ENCODE measurements at regions of chr15 and their contacts with region 1.

Region 1: GRCh38 chr15:69058830-69059556 is 44.5 kb downstream of the NOX5 start:
- DNase-seq: peak; percentile 90
- H3K4me3 ChIP-seq: no peak overlapping the region
- H3K27ac ChIP-seq: no peak overlapping the region
- H3K4me1 ChIP-seq: peaks cover 0 to 8% (median 2%) of the 10 kb centered on the region in 4 donors
- H3K27me3 ChIP-seq: peaks cover 0 to 11% (median 0%) of the 10 kb centered on the region in 3 donors
- CTCF ChIP-seq: peak; percentile 75 to 89 (median 78)
- EP300 ChIP-seq: no peak
- POLR2A ChIP-seq: no peak

Region 2: DNA sequence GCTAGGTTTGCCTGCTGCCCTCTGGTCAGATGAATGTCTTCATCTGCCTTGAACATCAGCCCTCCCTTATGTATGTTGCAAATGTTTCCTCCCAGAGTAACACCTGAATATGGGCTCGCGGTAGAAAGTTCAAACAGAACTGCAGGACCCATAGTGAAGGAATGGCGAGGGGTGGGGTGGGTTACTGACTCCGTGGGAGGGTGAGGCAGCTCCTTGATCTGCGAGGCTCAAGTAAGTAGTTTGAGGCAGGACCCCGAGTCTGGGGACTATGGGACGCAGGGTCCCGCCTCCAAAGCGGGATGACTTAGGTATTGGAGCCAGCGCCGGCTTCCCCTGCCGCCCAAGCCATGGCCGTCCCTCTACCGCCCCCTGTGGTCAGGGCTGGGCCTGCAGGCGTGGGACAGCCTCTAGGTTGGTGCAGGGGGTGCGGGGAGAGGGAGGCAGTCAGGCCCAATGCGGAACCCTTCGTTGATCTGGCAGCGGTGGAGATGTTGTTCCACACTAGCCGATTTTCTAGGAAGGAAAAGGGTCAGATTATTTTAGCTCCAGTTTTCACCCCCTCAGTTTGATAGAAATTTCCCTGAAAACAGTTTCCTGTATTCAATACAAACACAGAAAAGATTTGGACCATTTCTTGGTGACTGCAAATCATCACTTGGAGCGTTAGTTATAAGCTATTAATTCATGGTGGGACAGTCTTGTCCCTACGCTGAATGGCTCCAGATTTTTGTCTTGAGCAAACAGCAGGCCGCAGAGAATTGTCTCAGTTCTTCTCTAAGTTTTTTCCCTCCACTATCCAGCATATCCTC is 407.9 kb before region 1 on chr15:
- intact Hi-C with region 1: no loop called
- DNase-seq: peak; percentile 76
- H3K4me3 ChIP-seq: no peak overlapping the region
- H3K27ac ChIP-seq: peak overlapping the region in 1 of 4 donors; percentile 31
- H3K4me1 ChIP-seq: peaks cover 0 to 8% (median 4%) of the 10 kb centered on the region in 4 donors
- H3K27me3 ChIP-seq: no peaks in the 10 kb centered on the region
- CTCF ChIP-seq: peak in 3 of 4 experiments; percentile 30 to 47 (median 40)
- EP300 ChIP-seq: no peak
- POLR2A ChIP-seq: no peak

Region 3: DNA sequence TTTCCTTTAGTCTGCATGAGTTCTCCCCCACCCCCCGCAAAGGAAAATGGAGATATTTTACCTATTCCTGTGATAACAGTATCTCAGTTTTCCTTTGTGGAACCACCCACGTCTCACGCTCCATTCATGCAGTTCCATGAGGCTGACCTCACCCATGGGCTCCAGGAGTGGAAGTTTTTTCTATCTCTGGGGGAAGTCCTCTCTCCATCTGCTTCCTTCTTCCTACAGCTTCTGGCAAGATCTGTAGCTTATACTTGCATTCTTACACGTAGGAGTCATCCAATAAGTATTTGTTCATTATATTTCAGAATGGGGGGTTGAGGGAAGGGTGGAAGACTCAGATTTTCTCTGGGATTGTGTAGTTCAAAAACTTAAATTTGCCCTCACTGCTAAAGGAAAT is 95.7 kb after region 1 on chr15:
- intact Hi-C with region 1: loop called (anchors 10 kb)
- DNase-seq: no peak
- H3K4me3 ChIP-seq: no peak overlapping the region
- H3K27ac ChIP-seq: no peak overlapping the region
- H3K4me1 ChIP-seq: peaks cover 0 to under 1% (median 0%) of the 10 kb centered on the region in 4 donors
- H3K27me3 ChIP-seq: no peaks in the 10 kb centered on the region
- CTCF ChIP-seq: no peak
- EP300 ChIP-seq: no peak
- POLR2A ChIP-seq: no peak

Region 4: GRCh38 chr15:69225355-69226025 is 166.5 kb after region 1 on chr15:
- intact Hi-C with region 1: loop called (anchors 1 kb)
- DNase-seq: no peak
- H3K4me3 ChIP-seq: no peak overlapping the region
- H3K27ac ChIP-seq: no peak overlapping the region
- H3K4me1 ChIP-seq: no peaks in the 10 kb centered on the region
- H3K27me3 ChIP-seq: no peaks in the 10 kb centered on the region
- CTCF ChIP-seq: no peak
- EP300 ChIP-seq: no peak
- POLR2A ChIP-seq: no peak

Region 5: GRCh38 chr15:69244798-69245197 is 185.8 kb after region 1 on chr15:
- intact Hi-C with region 1: no loop called
- DNase-seq: no peak
- H3K4me3 ChIP-seq: no peak overlapping the region
- H3K27ac ChIP-seq: no peak overlapping the region
- H3K4me1 ChIP-seq: no peaks in the 10 kb centered on the region
- H3K27me3 ChIP-seq: no peaks in the 10 kb centered on the region
- CTCF ChIP-seq: no peak
- EP300 ChIP-seq: no peak
- POLR2A ChIP-seq: no peak

Region 6: GRCh38 chr15:69265347-69265955 is 206.5 kb after region 1 on chr15:
- intact Hi-C with region 1: loop called (anchors 2 kb)
- DNase-seq: no peak
- H3K4me3 ChIP-seq: no peak overlapping the region
- H3K27ac ChIP-seq: no peak overlapping the region
- H3K4me1 ChIP-seq: no peaks in the 10 kb centered on the region
- H3K27me3 ChIP-seq: no peaks in the 10 kb centered on the region
- CTCF ChIP-seq: peak; percentile 11 to 51 (median 40)
- EP300 ChIP-seq: no peak
- POLR2A ChIP-seq: no peak

Region 7: DNA sequence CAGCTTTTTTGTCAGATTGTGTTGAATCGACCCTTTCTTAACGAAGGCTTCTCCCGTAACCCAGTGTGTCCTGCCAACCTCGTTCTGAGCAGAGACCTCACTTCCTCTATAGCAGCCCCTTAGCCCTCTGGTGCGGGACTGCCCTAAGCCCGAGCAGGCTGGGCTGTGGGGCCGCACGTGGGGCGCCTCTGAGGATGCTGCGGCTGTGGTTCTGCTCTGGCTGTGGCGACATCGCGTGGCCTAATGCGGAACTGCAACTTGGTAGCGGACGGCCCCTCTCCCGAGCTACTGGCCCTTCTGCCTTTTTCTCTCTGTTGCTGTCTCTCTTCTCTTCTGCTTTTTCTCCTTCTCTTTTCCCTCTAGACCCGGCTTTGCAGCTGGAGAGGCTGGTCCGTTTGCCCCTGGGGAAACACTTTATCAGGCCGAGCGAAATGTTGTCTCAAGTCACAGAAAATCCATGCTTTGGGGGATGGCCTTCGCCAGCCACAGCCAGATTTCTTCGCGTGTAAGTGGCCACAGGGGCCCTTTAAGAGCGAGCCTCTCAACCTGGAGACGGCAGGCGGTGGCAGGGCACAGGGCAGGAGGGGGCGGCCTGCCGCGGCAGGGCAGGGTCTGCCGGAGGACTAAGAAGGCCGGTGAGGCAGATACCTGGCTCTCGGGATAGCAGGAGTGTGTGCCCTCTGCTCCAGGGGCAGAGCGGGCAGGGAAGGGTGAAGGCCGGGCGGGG is 335.7 kb after region 1 on chr15:
- intact Hi-C with region 1: loop called (anchors 1 kb)
- DNase-seq: peak; percentile 87
- H3K4me3 ChIP-seq: no peak overlapping the region
- H3K27ac ChIP-seq: no peak overlapping the region
- H3K4me1 ChIP-seq: peaks cover 0 to 7% (median 5%) of the 10 kb centered on the region in 4 donors
- H3K27me3 ChIP-seq: no peaks in the 10 kb centered on the region
- CTCF ChIP-seq: peak; percentile 60 to 94 (median 84)
- EP300 ChIP-seq: no peak
- POLR2A ChIP-seq: no peak